H1 (cell line): ENCODE measurements at regions of chr17 and their contacts with region 1.

Region 1: DNA sequence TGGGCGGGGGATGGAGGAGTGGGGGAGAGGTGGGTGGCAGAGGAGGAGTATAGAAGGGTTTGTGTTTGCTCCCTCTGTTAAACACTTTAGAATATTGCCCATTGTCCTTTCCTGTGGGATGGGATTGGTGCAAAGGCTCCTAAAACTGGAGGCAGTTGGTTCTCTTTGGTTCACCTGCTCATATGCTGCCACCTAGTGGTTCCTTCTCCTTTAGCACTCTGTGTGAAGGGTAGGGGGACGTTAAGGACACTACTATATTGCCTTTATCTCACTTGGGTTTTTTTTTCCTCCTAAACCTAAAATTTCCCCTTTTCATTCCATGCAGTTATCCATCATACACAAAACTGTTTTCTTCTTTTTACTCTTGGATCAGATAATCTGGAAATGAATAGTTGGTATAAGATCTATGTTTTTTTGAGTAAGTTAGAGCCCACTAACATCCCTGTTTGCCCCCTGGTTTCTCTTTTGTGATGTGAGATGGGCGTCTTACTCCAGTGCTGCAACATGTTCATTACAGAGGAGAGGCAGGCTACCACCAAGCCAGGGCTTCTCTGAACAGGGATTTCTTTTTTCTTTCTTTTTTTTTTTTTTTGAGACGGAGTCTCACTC is 23.8 kb downstream of the SNX11 start:
- DNase-seq: peak; percentile 15 to 68
- H3K4me3 ChIP-seq: no peak overlapping the region
- H3K27ac ChIP-seq: no peak overlapping the region
- H3K4me1 ChIP-seq: no peaks in the 10 kb centered on the region
- H3K27me3 ChIP-seq: no peaks in the 10 kb centered on the region
- CTCF ChIP-seq: peak; percentile 6 to 87 (median 87)
- EP300 ChIP-seq: no peak
- POLR2A ChIP-seq: no peak
- RAD21 ChIP-seq: peak; percentile 89 to 91

Region 2: DNA sequence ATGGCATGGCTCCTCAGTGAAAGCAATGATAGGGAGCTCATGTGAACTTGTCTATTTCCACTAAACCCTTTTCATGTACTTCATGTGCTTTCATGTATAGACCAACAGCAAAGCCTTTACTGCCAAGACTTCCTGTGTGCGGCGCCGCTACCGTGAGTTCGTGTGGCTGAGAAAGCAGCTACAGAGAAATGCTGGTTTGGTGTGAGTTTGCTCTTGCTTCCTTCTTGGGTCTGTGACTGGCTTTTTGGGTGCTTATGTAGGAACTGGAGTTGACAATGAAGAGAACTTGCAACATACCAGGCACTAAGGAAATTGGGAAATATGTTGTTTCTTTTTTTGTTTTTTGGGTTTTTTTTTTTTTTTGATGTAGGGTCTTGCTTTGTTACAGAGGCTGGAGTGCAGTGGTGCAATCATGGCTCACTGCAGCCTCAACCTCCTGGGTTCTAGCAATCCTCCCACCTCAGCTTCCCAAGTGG is 18.1 kb before region 1 on chr17:
- CTCF ChIA-PET with region 1: interaction called, 18 read pairs
- POLR2A ChIA-PET with region 1: interaction called, 3 read pairs
- DNase-seq: no peak
- H3K4me3 ChIP-seq: no peak overlapping the region
- H3K27ac ChIP-seq: no peak overlapping the region
- H3K4me1 ChIP-seq: no peaks in the 10 kb centered on the region
- H3K27me3 ChIP-seq: no peaks in the 10 kb centered on the region
- CTCF ChIP-seq: no peak
- EP300 ChIP-seq: no peak
- POLR2A ChIP-seq: no peak
- RAD21 ChIP-seq: no peak